ENCODE measurements at regions of chr16 and their contacts with region 1.

Region 1: GRCh38 chr16:49876716-49877129 is 20.8 kb upstream of the ZNF423 start:
- DNase-seq: peak; percentile 57
- H3K4me3 Mint-ChIP-seq: no peak overlapping the region
- H3K27ac Mint-ChIP-seq: no peak overlapping the region
- H3K4me1 Mint-ChIP-seq: no peaks in the 10 kb centered on the region
- H3K27me3 Mint-ChIP-seq: peaks cover 32% of the 10 kb centered on the region

Region 2: DNA sequence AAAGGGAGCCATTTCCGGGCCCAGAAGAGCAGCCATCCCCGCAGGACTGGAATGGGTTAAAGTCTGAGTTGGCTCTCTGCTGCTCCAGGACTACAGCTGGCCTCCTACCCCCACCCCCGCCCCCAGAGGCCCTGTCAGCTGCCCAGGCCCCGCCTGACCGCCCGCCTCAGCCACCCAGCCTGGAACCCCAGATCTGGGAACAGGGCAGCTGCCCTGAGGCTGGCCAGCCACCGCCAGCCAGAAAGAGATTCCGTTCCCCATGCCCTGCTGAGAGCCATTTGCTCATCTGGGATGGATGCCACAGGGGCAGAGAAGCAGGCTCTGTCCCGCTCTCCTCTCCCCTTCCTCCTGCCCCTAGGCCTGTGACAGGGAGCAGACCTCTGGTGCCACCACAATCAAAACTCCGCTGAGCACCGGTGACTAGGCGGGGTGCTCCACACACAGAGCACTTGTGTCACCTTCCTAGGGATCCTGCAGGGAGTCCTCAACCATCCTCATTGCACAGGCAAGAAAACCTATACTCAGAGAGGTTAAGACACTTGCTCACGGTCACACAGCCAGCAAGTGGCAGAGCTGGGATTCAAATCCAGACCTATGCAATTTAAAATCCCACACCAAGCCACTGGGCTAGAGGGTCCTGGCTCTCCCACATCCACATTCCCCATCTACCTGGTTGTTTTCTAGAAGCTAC is 64.9 kb before region 1 on chr16:
- CTCF ChIA-PET with region 1: no interaction called
- POLR2A ChIA-PET with region 1: no interaction called
- intact Hi-C with region 1: no loop called
- DNase-seq: no peak
- H3K4me3 Mint-ChIP-seq: no peak overlapping the region
- H3K27ac Mint-ChIP-seq: no peak overlapping the region
- H3K4me1 Mint-ChIP-seq: no peaks in the 10 kb centered on the region
- H3K27me3 Mint-ChIP-seq: no peaks in the 10 kb centered on the region

Region 3: GRCh38 chr16:49855280-49855821 is 21.4 kb before region 1 on chr16:
- CTCF ChIA-PET with region 1: interaction called, 14 read pairs
- POLR2A ChIA-PET with region 1: no interaction called
- intact Hi-C with region 1: no loop called
- DNase-seq: peak; percentile 55
- H3K4me3 Mint-ChIP-seq: peak overlapping the region; percentile 35
- H3K27ac Mint-ChIP-seq: no peak overlapping the region
- H3K4me1 Mint-ChIP-seq: peaks cover 15% of the 10 kb centered on the region
- H3K27me3 Mint-ChIP-seq: peaks cover 38% of the 10 kb centered on the region

Region 4: DNA sequence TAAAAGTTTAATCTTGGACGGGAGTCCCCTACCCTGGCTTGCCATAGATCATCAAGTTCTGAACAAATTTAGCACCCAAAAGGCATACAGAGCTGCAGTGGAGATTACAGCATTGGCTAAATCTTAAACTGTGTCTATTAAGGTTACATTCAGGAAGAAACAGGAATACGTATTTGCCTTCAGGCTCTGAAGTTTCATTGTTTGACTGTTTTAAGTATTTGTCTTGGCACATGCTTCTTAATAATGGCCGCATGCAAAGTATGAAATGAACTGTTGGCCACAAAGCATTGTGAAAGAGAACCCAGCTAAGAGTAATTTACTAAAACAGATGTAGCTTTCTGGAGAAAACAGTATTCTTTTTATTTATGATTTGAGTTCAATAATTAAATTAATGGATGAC is 84.4 kb after region 1 on chr16:
- CTCF ChIA-PET with region 1: no interaction called
- POLR2A ChIA-PET with region 1: no interaction called
- intact Hi-C with region 1: no loop called
- DNase-seq: no peak
- H3K4me3 Mint-ChIP-seq: no peak overlapping the region
- H3K27ac Mint-ChIP-seq: no peak overlapping the region
- H3K4me1 Mint-ChIP-seq: no peaks in the 10 kb centered on the region
- H3K27me3 Mint-ChIP-seq: peaks cover 2% of the 10 kb centered on the region